Aorta (tissue), 5 donors: ENCODE measurements at regions of chr1 and their contacts with region 1.

Region 1: GRCh38 chr1:3410142-3410925 is 44.1 kb upstream of the ARHGEF16 start:
- DNase-seq: peak; percentile 83 to 91
- ATAC-seq: peak; percentile 82
- H3K4me3 ChIP-seq: no peak overlapping the region
- H3K27ac ChIP-seq: no peak overlapping the region
- H3K4me1 ChIP-seq: no peaks in the 10 kb centered on the region
- H3K27me3 ChIP-seq: no peaks in the 10 kb centered on the region

Region 2: GRCh38 chr1:3283849-3284248 is 126.5 kb before region 1 on chr1:
- intact Hi-C with region 1: loop called in 1 of 2 experiments (anchors 10 kb)
- DNase-seq: peak in 1 of 2 donors; percentile 88
- ATAC-seq: peak; percentile 61
- H3K4me3 ChIP-seq: no peak overlapping the region
- H3K27ac ChIP-seq: peak overlapping the region in 1 of 2 donors; percentile 19
- H3K4me1 ChIP-seq: no peaks in the 10 kb centered on the region
- H3K27me3 ChIP-seq: no peaks in the 10 kb centered on the region

Region 3: GRCh38 chr1:3384407-3384806 is 25.9 kb before region 1 on chr1:
- intact Hi-C with region 1: no loop called
- DNase-seq: no peak
- ATAC-seq: no peak
- H3K4me3 ChIP-seq: no peak overlapping the region
- H3K27ac ChIP-seq: no peak overlapping the region
- H3K4me1 ChIP-seq: no peaks in the 10 kb centered on the region
- H3K27me3 ChIP-seq: no peaks in the 10 kb centered on the region

Region 4: DNA sequence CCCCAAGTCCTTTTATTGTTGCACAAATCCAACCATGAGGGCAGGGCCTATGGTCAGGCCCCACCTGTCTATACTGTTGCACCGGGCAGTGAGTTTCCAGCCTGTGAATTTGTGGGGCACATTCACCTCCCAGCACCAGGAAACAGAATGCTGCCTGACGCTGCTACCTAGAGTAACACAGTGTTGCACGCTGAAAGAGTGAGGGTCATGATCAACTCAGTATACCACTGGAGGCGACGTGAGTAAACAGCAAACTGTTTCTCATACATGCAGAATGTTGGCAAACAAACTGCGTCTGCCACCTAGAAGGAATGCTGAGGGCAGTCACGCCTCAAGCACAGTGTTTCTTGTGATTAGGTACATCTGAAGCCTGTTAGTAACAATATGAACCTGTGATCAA is 399.3 kb after region 1 on chr1:
- intact Hi-C with region 1: no loop called
- DNase-seq: peak in 1 of 2 donors; percentile 43
- ATAC-seq: no peak
- H3K4me3 ChIP-seq: no peak overlapping the region
- H3K27ac ChIP-seq: no peak overlapping the region
- H3K4me1 ChIP-seq: no peaks in the 10 kb centered on the region
- H3K27me3 ChIP-seq: no peaks in the 10 kb centered on the region